GM13976 (cell line): ENCODE measurements at regions of chr16 and their contacts with region 1.

Region 1: DNA sequence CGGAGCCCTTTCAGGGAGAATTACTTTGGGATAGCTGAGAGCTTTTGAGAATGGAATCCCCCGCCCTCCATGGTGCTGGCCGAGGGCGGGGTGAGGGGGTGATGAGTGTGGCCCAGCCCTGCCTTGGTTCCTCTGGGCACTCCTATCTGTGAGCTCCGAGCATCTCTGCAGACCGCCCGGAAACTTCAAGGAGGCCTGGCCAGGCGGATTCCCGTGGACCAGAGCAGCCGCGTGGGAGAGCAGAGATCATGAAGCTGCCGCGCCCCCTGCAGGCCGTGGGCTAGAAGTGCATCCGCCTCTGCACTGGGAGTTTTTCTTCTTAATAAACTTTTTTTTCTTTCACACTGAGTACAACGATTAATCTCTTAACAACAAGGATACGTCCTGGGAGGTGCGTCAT is 392.9 kb upstream of the EEF2KMT start:
- DNase-seq: no peak
- CTCF ChIP-seq: peak; percentile 36

Region 2: GRCh38 chr16:4752351-4753100 is 738.0 kb before region 1 on chr16:
- in situ Hi-C with region 1: no loop called
- DNase-seq: no peak
- CTCF ChIP-seq: no peak

Region 3: GRCh38 chr16:5188318-5188988 is 302.0 kb before region 1 on chr16:
- in situ Hi-C with region 1: no loop called
- DNase-seq: no peak
- CTCF ChIP-seq: no peak

Region 4: DNA sequence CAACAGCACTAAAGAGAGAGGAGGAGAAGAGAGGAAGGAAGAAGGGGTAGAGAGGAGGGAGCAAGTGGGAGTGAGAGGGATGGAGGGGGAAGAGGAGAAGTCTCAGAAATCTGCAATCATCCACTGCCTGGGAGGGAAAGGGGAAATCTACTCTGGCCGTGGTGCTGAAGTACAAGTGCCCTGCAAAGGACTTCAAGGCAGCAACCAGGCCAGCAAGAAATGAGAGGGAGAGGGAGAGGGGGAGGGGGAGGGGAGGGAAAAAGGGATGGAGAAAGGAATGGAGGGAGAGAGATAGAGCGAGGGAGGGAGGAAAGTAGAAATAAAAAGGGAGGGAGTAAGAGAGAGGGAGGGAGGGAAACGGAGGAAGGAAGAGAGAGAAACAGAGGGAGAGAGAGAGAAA is 262.1 kb before region 1 on chr16:
- in situ Hi-C with region 1: loop called (anchors 25 kb)
- DNase-seq: no peak
- CTCF ChIP-seq: no peak

Region 5: GRCh38 chr16:5379954-5380353 is 110.5 kb before region 1 on chr16:
- in situ Hi-C with region 1: loop called (anchors 25 kb)
- DNase-seq: no peak
- CTCF ChIP-seq: no peak

Region 6: GRCh38 chr16:5604770-5605169 is 114.3 kb after region 1 on chr16:
- in situ Hi-C with region 1: no loop called
- DNase-seq: no peak
- CTCF ChIP-seq: no peak